ENCODE measurements at regions of chr12 and their contacts with region 1.

Region 1: DNA sequence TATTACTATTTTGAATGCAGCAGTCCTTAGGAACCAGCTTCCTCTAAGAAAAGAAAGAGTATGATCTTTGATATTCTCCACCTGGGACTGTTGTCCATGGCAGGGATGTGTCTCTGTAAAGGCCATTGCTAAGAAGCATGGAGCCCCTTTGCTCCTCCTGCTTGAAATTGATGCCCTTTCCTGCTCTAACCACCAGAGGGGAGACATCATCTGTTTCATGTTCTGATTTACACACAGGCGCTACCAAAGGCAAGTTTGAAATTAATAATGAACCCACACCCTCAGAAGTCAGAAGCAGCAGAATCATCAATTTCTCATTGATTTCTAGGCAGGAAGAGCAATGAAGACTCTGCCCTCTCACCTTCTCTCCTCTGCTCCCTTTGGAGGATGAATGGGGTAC is 253.8 kb downstream of the RMST start:
- DNase-seq: peak; percentile 30
- H3K4me3 Mint-ChIP-seq: no peak overlapping the region
- H3K27ac Mint-ChIP-seq: no peak overlapping the region
- H3K4me1 Mint-ChIP-seq: peaks cover 44% of the 10 kb centered on the region
- H3K27me3 Mint-ChIP-seq: no peaks in the 10 kb centered on the region
- CTCF ChIP-seq: peak; percentile 56

Region 2: DNA sequence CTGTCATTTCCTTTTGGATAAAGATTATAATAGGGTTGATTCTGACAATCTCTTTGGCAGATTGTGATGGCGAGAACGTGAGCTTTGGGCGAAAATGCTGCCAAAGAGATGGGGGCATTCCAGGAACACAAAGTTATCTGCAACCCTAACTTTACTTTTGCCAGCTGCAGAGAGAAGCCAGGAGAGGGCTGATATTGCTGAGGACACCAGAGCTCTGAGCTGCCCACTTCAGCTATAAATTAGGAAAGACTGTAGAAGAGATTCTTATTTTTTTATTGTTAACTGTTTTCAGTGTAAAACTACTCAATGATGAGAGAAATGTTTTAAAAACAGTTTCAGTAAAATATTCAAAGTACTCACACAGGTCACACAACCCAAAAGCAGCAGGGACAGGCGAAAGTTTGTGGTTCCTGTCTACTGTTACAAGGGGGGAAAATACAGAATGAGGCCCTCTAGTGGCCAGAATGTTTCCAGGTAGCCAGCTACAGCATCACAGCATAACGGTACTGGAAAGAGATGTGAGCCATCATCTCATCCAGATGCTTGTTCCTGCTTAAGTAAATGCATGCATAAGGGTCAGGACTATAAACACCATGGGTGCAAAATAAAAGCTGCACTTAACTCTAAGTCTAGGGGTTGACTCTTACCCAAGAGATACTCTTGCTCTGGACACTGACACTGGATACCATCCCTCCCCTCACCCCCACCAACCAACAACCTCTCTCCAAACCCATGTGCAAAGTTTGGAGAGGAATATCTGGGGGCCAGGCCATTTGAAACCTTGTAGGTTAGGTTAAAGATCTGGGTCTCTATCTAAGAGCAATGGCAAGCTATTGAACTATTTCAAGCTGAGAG is 244.6 kb after region 1 on chr12:
- CTCF ChIA-PET with region 1: interaction called, 6 read pairs
- intact Hi-C with region 1: loop called (anchors 2 kb)
- DNase-seq: peak; percentile 56
- H3K4me3 Mint-ChIP-seq: no peak overlapping the region
- H3K27ac Mint-ChIP-seq: no peak overlapping the region
- H3K4me1 Mint-ChIP-seq: no peaks in the 10 kb centered on the region
- H3K27me3 Mint-ChIP-seq: no peaks in the 10 kb centered on the region
- CTCF ChIP-seq: peak; percentile 67

Region 3: DNA sequence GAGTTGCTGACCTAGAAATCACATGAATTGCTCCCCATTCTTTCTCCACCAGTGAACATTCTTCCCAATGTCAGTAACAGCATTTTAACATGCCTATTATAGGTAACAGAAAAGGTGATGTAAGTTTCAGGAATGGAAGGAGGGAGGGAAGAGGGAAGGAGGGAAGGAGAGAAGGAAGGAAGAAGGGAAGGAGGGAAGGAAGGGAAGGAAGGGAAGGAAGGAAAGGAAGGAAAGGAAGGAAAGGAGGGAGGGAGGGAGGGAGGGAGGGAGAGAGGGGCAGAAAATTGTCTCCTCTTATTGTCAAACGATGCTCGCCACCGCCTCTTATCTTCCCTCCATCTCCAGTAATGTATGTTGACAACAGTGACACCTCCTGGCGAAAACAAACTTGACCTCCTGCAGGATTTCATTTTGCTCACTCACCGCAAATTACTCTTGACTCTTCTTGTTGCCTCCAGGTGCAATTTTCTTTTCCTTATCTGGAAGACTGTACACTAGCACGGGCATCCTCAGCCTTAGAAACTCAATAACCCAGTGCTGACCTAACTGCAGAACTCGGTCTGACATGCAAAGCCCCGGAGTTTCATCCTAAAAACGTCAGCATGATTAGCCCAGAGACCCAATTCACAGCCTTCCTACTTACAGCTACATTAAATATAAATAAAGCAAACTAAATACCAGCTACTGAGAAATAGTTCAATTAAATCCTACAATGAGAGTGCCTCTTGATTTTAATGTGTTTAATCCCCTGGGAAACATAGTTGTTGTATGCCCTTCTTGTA is 286.5 kb after region 1 on chr12:
- CTCF ChIA-PET with region 1: no interaction called
- intact Hi-C with region 1: loop called (anchors 2 kb)
- DNase-seq: peak; percentile 72
- H3K4me3 Mint-ChIP-seq: no peak overlapping the region
- H3K27ac Mint-ChIP-seq: no peak overlapping the region
- H3K4me1 Mint-ChIP-seq: peaks cover 9% of the 10 kb centered on the region
- H3K27me3 Mint-ChIP-seq: no peaks in the 10 kb centered on the region
- CTCF ChIP-seq: peak; percentile 61